ENCODE measurements at regions of chr9 and their contacts with region 1.

Region 1: DNA sequence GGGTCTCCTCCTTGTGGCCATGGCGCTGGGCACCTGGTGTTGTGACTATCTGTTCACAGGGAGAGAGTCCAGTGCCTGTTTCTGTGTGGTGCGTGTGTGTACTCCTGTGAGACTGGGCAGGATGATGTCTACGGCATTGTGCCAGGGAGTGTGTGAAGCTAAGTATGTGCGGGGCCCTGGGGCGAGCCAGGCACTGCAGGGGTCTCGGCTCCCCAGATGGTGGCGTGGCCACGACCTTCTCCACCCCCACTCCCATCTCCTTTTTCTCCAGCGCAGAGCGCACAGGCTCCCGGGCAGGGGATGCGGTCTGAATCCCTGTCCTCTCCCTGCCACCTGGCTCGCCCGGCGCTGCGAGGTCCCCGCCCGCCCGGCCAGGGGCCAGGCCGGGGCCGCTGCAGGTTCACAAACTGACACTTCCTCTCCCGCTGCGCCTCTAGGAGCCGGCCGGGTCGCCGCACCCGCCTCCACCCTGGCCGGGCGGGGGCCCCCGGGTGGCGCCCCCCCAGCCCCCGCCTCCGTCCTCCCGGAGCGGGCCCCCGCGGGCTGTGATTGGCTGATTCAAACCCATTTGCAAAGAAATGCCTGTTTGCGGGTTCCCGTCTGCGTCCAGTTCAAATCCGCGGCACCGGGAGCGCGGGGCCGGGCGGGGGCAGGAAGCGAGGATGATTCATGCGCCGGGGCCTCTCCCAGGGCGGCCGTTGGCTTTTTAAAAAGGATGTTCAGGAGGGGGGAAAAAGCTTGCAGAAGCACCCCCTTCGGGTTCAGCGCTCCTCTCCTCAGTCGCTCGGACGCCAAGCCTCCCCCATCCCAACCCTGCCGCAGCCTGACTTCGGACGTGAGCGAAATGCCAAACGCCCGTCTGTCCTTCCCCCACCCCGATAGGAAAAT is 790 bp downstream of the PHF19 start:
- DNase-seq: peak; percentile 86
- ATAC-seq: peak; percentile 86
- H3K4me3 ChIP-seq: peak overlapping the region; percentile 77 to 87 (median 86)
- H3K27ac ChIP-seq: peak overlapping the region; percentile 96
- H3K4me1 ChIP-seq: peaks cover 45% of the 10 kb centered on the region
- H3K27me3 ChIP-seq: no peaks in the 10 kb centered on the region; a peak in 1 of 5 replicates
- CTCF ChIP-seq: peak; percentile 40
- EP300 ChIP-seq: peak; percentile 19 to 45; a peak in 2 of 4 replicates
- POLR2A ChIP-seq: peak; percentile 17 to 27; a peak in 3 of 4 replicates
- RAD21 ChIP-seq: peak; percentile 48; the same call in 1 of the 2 replicates

Region 2: GRCh38 chr9:120755827-120756434 is 120.3 kb before region 1 on chr9:
- CTCF ChIA-PET with region 1: no interaction called
- POLR2A ChIA-PET with region 1: no interaction called
- in situ Hi-C with region 1: no loop called
- intact Hi-C with region 1: loop called (anchors 5 kb)
- DNase-seq: peak; percentile 39
- ATAC-seq: peak; percentile 79
- H3K4me3 ChIP-seq: no peak overlapping the region
- H3K27ac ChIP-seq: no peak overlapping the region
- H3K4me1 ChIP-seq: no peaks in the 10 kb centered on the region
- H3K27me3 ChIP-seq: no peaks in the 10 kb centered on the region
- CTCF ChIP-seq: peak; percentile 90
- EP300 ChIP-seq: no peak
- POLR2A ChIP-seq: no peak
- RAD21 ChIP-seq: peak; percentile 90

Region 3: GRCh38 chr9:120842690-120843499 is 33.3 kb before region 1 on chr9 and contains the start of gene PSMD5:
- CTCF ChIA-PET with region 1: no interaction called
- POLR2A ChIA-PET with region 1: no interaction called
- in situ Hi-C with region 1: no loop called
- intact Hi-C with region 1: loop called (anchors 2 kb)
- DNase-seq: peak; percentile 94
- ATAC-seq: peak; percentile 96
- H3K4me3 ChIP-seq: peak within 1 kb of the TSS; percentile 73 to 91 (median 87)
- H3K27ac ChIP-seq: peak within 1 kb of the TSS; percentile 82
- H3K4me1 ChIP-seq: peaks cover 30% of the 10 kb centered on the region
- H3K27me3 ChIP-seq: peaks cover 0 to 3% of the 10 kb centered on the region in 2 experiments; a peak in 1 of 5 replicates
- CTCF ChIP-seq: peak; percentile 48
- EP300 ChIP-seq: no peak
- POLR2A ChIP-seq: peak; percentile 86 to 89
- RAD21 ChIP-seq: peak; percentile 8; the same call in 1 of the 2 replicates
- total RNA-seq, gene PSMD5: 18.1 and 32.6 TPM in 2 replicates

Region 4: DNA sequence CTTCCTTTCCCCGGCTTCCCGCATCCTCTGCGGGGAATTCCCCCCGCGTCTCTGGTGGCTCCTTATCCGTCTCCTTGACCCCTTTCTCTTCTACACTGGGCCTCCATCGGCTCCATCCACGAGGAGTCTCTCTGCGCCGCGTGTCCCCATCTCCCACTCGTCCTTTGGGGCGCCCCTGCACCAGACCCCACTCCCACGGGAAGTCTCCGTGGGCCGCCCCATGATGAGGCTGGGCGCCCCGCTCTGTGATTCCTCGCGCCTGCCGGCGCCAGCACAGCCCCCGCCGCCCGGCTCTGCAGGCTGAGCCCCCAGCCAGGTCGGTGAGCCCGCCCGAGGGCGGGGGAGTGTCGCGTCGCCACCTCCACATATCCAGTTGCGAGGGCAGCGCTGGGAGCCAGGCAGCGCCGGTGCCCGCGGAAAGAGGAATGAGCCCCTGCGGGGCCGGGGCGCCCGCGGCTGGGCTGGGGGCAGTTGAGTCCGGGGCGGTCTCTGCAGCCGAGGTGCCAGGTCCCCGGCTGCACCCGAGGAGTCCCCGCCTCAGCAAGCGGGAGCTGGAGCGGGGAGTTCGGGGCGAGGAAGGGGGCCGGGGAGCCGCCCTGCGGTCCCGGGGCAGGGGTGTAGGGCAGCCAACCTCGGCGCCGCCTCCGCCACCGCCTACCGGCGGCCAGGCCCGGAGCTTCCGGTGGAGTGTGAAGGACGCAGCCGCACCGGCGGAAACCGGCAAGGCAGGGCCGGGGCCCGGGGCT is 52.5 kb after region 1 on chr9:
- CTCF ChIA-PET with region 1: no interaction called
- POLR2A ChIA-PET with region 1: no interaction called
- in situ Hi-C with region 1: no loop called
- intact Hi-C with region 1: loop called (anchors 2 kb)
- DNase-seq: peak; percentile 21
- ATAC-seq: peak; percentile 93
- H3K4me3 ChIP-seq: peak overlapping the region; percentile 69 to 86 (median 84)
- H3K27ac ChIP-seq: peak overlapping the region; percentile 27
- H3K4me1 ChIP-seq: peaks cover 17% of the 10 kb centered on the region
- H3K27me3 ChIP-seq: peaks cover 2 to 17% of the 10 kb centered on the region in 2 experiments; a peak in 2 of 5 replicates
- CTCF ChIP-seq: no peak
- EP300 ChIP-seq: no peak
- POLR2A ChIP-seq: peak in 1 of 2 experiments; percentile 65; a peak in 2 of 4 replicates
- RAD21 ChIP-seq: peak; percentile 33; the same call in 1 of the 2 replicates

Region 5: DNA sequence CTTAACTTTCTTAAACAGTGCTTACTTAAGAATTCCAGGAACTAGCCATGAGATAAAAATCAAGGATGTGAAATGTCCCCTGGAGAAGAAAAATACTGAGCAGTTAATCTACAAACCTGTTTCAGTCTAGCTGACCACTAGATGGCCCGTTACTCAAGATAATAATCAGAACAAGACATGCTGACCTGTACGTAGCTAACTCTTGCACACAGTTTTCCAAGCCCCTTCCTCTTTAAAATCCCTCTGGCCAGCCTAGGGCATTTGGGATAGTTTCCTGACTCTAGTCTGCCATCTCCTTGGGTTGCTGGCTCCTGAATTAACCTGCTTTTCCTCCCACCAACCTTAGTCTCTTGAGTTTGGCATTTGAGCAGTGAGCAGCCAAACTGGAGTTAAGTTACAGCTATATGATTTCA is 109.6 kb after region 1 on chr9:
- CTCF ChIA-PET with region 1: no interaction called
- POLR2A ChIA-PET with region 1: no interaction called
- in situ Hi-C with region 1: no loop called
- intact Hi-C with region 1: no loop called
- DNase-seq: peak; percentile 56
- ATAC-seq: peak; percentile 77
- H3K4me3 ChIP-seq: no peak overlapping the region
- H3K27ac ChIP-seq: no peak overlapping the region
- H3K4me1 ChIP-seq: peaks cover 20% of the 10 kb centered on the region
- H3K27me3 ChIP-seq: no peaks in the 10 kb centered on the region
- CTCF ChIP-seq: peak; percentile 71
- EP300 ChIP-seq: no peak
- POLR2A ChIP-seq: no peak
- RAD21 ChIP-seq: peak; percentile 24; the same call in 1 of the 2 replicates

Measured in HepG2 (cell line).